ENCODE measurements at regions of chr15 and their contacts with region 1.

Region 1: GRCh38 chr15:90320061-90320884 is 31.8 kb upstream of the ZNF774 start:
- DNase-seq: peak; percentile 72 to 88 (median 79)
- ATAC-seq: peak; percentile 49 to 89 (median 79)
- H3K4me3 ChIP-seq: no peak overlapping the region
- H3K27ac ChIP-seq: peak overlapping the region in 2 of 4 donors; percentile 37 to 39
- H3K4me1 ChIP-seq: peaks cover 12 to 18% (median 18%) of the 10 kb centered on the region in 3 donors
- H3K27me3 ChIP-seq: no peaks in the 10 kb centered on the region
- CTCF ChIP-seq: peak; percentile 94 to 100 (median 98)

Region 2: DNA sequence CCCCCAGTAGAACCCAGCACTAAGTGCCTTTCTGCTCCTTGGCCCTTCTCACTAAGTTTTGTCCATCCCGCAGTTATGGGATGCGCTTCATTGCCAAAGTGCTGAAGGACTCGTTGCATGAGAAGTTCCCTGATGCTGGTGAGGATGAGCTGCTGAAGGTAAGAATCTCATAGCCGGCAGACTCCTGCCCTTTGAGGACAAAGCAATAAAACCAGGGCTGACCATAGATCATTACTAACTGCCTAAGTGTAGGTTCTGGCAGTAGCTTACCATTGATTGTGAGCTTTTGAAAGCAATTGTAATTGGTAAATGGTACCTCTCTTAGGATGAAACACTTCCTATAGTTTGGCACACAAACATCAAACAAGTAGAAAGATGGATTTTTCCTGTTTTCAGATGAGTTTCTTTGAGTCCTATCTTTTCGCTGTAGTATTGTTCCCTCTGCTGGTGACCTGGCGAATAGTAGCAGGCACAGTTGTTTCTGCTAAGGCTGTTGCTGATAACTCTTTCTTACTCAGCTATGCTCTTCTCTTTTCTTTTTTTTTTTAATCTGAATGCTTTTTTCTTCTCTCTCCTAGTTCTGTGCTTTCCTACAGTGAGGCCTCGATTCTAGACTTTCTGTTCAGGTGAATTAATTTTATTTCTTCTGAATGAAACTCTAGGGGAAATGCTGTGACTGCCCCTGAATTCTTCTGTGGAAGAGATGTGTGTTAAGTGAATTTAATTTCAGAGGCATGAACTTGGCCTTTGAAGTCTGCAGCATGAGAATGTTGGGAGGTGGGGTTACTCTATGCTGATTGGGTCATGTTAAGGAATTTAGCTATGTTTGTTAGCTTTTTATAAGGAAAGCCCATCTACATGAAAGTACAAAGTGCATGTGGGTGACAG is 162.1 kb after region 1 on chr15:
- intact Hi-C with region 1: loop called in 2 of 3 experiments (anchors 5 to 10 kb)
- DNase-seq: peak in 2 of 6 donors; percentile 17 to 62
- ATAC-seq: peak in 3 of 4 donors; percentile 34 to 66 (median 50)
- H3K4me3 ChIP-seq: no peak overlapping the region
- H3K27ac ChIP-seq: no peak overlapping the region
- H3K4me1 ChIP-seq: peaks cover 0 to 20% (median 13%) of the 10 kb centered on the region in 3 donors
- H3K27me3 ChIP-seq: no peaks in the 10 kb centered on the region
- CTCF ChIP-seq: peak in 3 of 4 donors; percentile 39 to 60 (median 40)

Measured in pancreas (tissue), 10 donors.